ENCODE measurements at regions of chr15 and their contacts with region 1.

Region 1: GRCh38 chr15:90648137-90649070 is 68.7 kb upstream of the BLM start:
- DNase-seq: peak; percentile 17 to 83 (median 44)
- ATAC-seq: peak; percentile 83
- H3K4me3 ChIP-seq: no peak overlapping the region
- H3K4me3 Mint-ChIP-seq: peak overlapping the region; percentile 30
- H3K27ac ChIP-seq: no peak overlapping the region
- H3K27ac Mint-ChIP-seq: peak overlapping the region; percentile 16
- H3K4me1 ChIP-seq: peaks cover 27% of the 10 kb centered on the region
- H3K4me1 Mint-ChIP-seq: peaks cover 34% of the 10 kb centered on the region
- H3K27me3 ChIP-seq: peaks cover 0 to 2% of the 10 kb centered on the region in 2 experiments
- H3K27me3 Mint-ChIP-seq: no peaks in the 10 kb centered on the region
- CTCF ChIP-seq: peak; percentile 93

Region 2: DNA sequence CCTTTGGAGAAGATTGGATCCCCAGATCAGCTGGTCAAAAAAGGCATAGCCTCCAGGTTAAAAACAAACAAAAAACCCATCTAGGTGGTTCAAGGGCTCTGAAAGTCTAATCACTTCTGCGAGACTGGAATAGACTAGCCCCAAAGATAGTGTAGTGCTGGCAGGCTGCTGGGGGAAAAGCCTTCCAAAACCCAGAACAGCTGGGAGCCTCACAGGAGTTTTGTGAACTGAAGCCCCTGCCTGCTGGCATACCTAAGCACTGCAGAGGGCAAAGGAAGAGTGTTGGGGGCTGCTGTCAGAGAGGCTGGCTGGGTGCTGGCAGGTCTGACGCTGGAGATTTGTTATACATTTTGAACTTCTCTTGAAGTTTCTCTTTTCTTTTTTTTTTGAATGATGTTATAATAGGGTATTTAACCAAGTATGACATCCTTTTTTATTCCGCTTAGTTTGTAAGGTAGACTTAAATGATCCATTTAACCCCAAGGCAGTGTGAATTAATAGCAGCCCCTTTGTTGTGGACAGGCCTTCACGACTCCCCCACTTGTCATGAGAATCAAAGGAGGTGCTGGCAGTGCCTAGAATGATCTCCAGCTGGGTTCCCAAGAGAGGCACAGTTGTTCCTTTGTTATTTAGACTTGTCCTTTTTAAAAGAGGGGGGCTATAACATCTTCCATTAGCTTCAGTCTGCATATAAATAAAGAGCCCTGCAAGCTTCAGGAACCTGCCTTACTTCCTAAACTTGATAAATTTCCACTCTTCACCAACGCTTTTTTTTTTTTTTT is 64.7 kb before region 1 on chr15:
- CTCF ChIA-PET with region 1: no interaction called
- POLR2A ChIA-PET with region 1: no interaction called
- intact Hi-C with region 1: no loop called
- DNase-seq: no peak
- ATAC-seq: no peak
- H3K4me3 ChIP-seq: no peak overlapping the region
- H3K4me3 Mint-ChIP-seq: no peak overlapping the region
- H3K27ac ChIP-seq: no peak overlapping the region
- H3K27ac Mint-ChIP-seq: peak overlapping the region; percentile 89
- H3K4me1 ChIP-seq: peaks cover 59% of the 10 kb centered on the region
- H3K4me1 Mint-ChIP-seq: peaks cover 66% of the 10 kb centered on the region
- H3K27me3 ChIP-seq: no peaks in the 10 kb centered on the region
- H3K27me3 Mint-ChIP-seq: no peaks in the 10 kb centered on the region
- CTCF ChIP-seq: no peak

Region 3: DNA sequence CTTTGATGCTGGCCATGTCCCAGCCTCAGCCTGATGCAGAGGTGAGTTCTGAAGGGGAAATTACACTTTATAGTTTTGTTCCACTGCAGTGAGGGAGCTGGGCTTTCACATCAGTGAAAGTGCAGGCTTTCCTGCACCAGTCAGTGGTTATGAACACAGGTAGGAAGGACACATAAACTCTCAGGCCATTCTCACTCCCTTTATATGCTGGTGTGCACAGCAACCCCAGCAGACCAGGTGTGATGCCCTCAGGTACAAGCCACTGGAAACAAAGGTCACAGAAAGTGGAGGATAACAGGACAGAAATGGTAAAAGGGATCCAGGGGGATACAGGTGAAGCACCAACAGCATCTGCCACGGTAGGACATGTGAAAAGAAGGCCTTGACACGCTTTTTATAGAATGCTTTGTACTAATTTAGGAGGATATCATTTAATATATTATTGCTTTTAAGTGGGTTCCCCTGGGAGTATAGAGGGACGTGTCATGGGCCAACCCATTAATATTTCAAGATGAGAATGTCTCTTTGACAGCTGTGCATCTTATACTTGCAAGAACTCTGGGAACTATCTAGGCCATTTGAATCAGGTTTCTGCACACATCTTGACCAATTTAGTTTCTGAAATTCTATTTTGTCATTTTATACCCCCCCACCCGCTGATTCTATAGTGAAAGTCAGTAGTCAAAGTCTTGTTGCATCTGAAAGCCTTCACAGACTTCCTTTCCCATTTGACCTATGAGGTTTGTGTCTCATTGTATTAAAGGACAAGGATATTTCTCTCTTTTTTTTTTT is 43.8 kb after region 1 on chr15:
- CTCF ChIA-PET with region 1: interaction called, 6 read pairs
- POLR2A ChIA-PET with region 1: interaction called, 4 read pairs
- intact Hi-C with region 1: loop called (anchors 1 kb)
- DNase-seq: no peak
- ATAC-seq: no peak
- H3K4me3 ChIP-seq: no peak overlapping the region
- H3K4me3 Mint-ChIP-seq: no peak overlapping the region
- H3K27ac ChIP-seq: no peak overlapping the region
- H3K27ac Mint-ChIP-seq: no peak overlapping the region
- H3K4me1 ChIP-seq: peaks cover 2% of the 10 kb centered on the region
- H3K4me1 Mint-ChIP-seq: peaks cover 18% of the 10 kb centered on the region
- H3K27me3 ChIP-seq: no peaks in the 10 kb centered on the region
- H3K27me3 Mint-ChIP-seq: no peaks in the 10 kb centered on the region
- CTCF ChIP-seq: no peak

Region 4: DNA sequence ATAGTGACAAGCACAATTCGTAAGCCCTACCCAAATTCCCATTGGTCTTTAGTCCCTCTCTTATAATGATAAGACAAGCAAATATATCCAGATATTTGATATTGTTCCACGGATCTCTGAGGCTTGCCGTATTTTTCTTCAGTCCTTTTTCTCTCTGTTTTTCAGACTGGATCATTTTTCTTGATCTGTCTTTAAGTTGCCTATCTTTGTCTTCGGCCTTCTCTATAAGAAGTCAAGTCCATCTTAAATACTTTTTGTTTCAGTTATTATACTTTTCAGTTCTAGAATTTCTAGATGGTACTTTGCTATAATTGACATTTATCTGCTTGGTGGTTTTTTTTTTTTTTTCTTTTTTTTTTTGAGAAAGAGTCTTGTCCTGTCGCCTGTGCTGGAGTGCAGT is 55.1 kb after region 1 on chr15:
- CTCF ChIA-PET with region 1: no interaction called
- POLR2A ChIA-PET with region 1: no interaction called
- intact Hi-C with region 1: no loop called
- DNase-seq: no peak
- ATAC-seq: no peak
- H3K4me3 ChIP-seq: no peak overlapping the region
- H3K4me3 Mint-ChIP-seq: no peak overlapping the region
- H3K27ac ChIP-seq: no peak overlapping the region
- H3K27ac Mint-ChIP-seq: no peak overlapping the region
- H3K4me1 ChIP-seq: no peaks in the 10 kb centered on the region
- H3K4me1 Mint-ChIP-seq: no peaks in the 10 kb centered on the region
- H3K27me3 ChIP-seq: no peaks in the 10 kb centered on the region
- H3K27me3 Mint-ChIP-seq: no peaks in the 10 kb centered on the region
- CTCF ChIP-seq: no peak

Region 5: GRCh38 chr15:90729261-90729660 is 80.9 kb after region 1 on chr15:
- CTCF ChIA-PET with region 1: no interaction called
- POLR2A ChIA-PET with region 1: no interaction called
- intact Hi-C with region 1: no loop called
- DNase-seq: no peak
- ATAC-seq: no peak
- H3K4me3 ChIP-seq: no peak overlapping the region
- H3K4me3 Mint-ChIP-seq: no peak overlapping the region
- H3K27ac ChIP-seq: no peak overlapping the region
- H3K27ac Mint-ChIP-seq: no peak overlapping the region
- H3K4me1 ChIP-seq: no peaks in the 10 kb centered on the region
- H3K4me1 Mint-ChIP-seq: no peaks in the 10 kb centered on the region
- H3K27me3 ChIP-seq: no peaks in the 10 kb centered on the region
- H3K27me3 Mint-ChIP-seq: no peaks in the 10 kb centered on the region
- CTCF ChIP-seq: no peak

Measured in CD4-positive, alpha-beta T cell (primary cell).